Adrenal gland (tissue), 19 donors: ENCODE measurements at regions of chr17 and their contacts with region 1.

Region 1: DNA sequence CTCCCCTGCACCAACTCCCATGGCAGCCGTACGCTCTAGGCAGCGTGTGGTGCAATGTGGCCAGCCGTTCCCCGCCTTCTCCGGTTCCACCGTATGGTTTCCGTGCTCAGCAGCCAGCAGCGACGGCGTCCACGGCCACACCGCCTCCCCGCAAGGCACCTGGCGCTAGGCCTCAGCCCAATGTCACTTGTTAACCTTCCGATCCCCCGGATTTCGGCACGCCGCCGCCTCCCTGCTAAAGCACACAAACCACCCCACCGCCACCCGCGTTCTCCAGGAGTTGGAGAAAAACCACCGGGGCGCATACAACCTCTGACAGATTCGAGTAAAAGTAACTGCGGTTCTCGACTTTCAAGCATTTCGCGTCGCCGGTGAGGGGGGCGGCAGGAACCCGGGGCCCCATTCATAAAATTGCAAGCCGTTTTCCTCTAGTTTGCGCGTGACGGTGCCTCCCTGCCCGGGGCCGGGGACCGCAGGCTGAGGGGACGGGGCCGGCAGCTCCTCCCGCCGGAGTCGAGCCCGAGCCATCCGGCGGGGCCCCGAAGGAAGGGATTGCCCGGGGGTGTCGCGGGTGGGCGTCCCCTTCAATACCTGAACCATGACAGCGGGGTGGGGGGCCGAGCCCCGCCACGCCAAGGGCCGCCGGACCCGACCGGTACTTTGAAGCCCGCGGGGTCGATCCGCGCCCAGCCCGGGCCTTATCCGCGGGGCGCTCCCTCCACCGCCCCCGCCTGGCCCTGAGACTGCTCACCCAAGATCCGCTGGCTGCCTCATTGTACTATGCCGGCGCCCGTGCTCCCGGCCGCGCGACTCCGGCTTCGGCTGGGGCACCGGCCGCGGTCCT is at the start of gene TEX2:
- DNase-seq: peak; percentile 63 to 75 (median 68)
- H3K4me3 ChIP-seq: peak within 1 kb of the TSS; percentile 41 to 99 (median 78)
- H3K27ac ChIP-seq: peak within 1 kb of the TSS; percentile 80 to 98 (median 91)
- H3K4me1 ChIP-seq: peaks cover 26 to 32% of the 10 kb centered on the region in 2 donors
- H3K27me3 ChIP-seq: no peaks in the 10 kb centered on the region
- CTCF ChIP-seq: no peak
- POLR2A ChIP-seq: peak; percentile 68 to 85
- total RNA-seq, gene TEX2: 56.5 to 91.5 (median 63.0) TPM

Region 2: GRCh38 chr17:63974594-63975192 is 287.9 kb before region 1 on chr17:
- intact Hi-C with region 1: no loop called
- DNase-seq: no peak
- H3K4me3 ChIP-seq: no peak overlapping the region
- H3K27ac ChIP-seq: no peak overlapping the region
- H3K4me1 ChIP-seq: no peaks in the 10 kb centered on the region
- H3K27me3 ChIP-seq: no peaks in the 10 kb centered on the region
- CTCF ChIP-seq: no peak
- POLR2A ChIP-seq: no peak

Region 3: DNA sequence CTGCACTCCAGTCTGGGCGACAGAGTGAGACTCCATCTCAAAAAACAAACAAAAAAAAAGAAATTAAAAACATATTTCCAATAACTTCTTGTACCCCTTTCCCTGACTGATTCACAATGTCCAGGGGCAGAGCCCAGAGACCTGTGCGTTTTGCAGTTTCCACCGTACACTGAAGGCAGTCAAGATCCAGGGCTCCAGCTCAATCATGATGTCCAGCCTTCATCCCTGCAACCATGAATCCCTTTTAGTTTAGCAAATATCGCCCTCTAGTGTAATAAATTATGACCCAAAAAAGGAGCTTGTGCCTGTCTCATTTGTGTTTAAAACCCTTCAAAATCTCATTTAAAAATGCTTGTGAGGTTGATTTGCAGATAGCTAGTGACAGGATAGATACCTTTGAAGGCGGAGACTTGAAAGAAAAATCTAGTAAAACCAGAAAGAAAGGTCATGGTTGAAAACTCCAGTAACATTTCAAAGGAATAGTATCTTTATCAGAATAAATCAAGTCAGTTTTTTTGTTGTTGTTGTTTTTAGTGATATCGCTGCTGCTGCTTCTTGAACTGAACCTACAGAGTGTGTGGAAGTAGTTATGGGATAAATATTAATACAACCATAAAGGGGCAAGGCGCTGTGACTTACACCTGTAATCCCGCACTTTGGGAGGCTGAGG is 129.0 kb before region 1 on chr17:
- intact Hi-C with region 1: no loop called
- DNase-seq: peak in 5 of 7 donors; percentile 56 to 76 (median 62)
- H3K4me3 ChIP-seq: no peak overlapping the region
- H3K27ac ChIP-seq: peak overlapping the region in 1 of 5 donors; percentile 90
- H3K4me1 ChIP-seq: peaks cover 26 to 28% of the 10 kb centered on the region in 2 donors
- H3K27me3 ChIP-seq: no peaks in the 10 kb centered on the region
- CTCF ChIP-seq: peak; percentile 55 to 86 (median 75)
- POLR2A ChIP-seq: no peak

Region 4: DNA sequence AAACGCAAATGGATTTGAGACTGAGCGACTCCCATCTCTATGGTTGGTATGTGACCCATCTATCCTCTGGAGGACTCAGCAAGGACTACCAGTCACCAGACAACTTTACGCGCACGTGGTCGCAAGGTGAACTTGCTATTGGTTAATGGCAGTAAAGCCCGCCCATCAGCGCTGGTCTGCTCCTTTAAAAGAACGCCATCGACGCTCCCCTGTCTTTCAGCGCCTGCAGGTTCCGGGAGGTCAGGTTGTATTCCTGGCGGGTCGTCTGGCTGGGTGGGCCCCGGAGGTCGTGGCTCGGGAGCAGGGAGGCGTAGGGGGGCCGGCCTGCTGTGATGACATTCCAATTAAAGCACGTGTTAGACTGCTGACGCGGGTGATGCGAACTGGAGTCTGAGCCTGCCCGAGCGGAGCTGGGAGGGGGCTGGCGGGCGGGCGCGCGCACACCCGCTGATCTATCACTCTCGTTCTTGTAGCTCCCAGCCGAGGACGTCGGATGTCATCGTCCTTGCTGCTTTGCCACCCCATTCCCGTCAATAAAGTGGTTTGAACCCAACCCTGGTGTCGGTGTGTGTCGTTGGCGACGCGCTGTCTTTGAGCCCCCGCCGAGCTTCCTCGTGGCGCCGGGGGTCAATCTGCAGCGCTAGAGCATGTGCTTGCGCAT is 116.8 kb before region 1 on chr17:
- intact Hi-C with region 1: loop called in 1 of 2 experiments (anchors 10 kb)
- DNase-seq: peak; percentile 95 to 100 (median 99)
- H3K4me3 ChIP-seq: peak overlapping the region; percentile 85 to 94 (median 90)
- H3K27ac ChIP-seq: peak overlapping the region; percentile 94 to 98 (median 96)
- H3K4me1 ChIP-seq: peaks cover 14 to 29% of the 10 kb centered on the region in 2 donors
- H3K27me3 ChIP-seq: no peaks in the 10 kb centered on the region
- CTCF ChIP-seq: peak in 3 of 6 experiments; percentile 6 to 36 (median 8)
- POLR2A ChIP-seq: peak; percentile 99

Region 5: GRCh38 chr17:64183815-64184214 is 78.8 kb before region 1 on chr17:
- intact Hi-C with region 1: loop called in 1 of 2 experiments (anchors 10 kb)
- DNase-seq: peak in 1 of 7 donors; percentile 35
- H3K4me3 ChIP-seq: no peak overlapping the region
- H3K27ac ChIP-seq: no peak overlapping the region
- H3K4me1 ChIP-seq: peaks cover 6 to 27% of the 10 kb centered on the region in 2 donors
- H3K27me3 ChIP-seq: no peaks in the 10 kb centered on the region
- CTCF ChIP-seq: no peak
- POLR2A ChIP-seq: no peak

Region 6: GRCh38 chr17:64320613-64321553 is 58.2 kb after region 1 on chr17:
- intact Hi-C with region 1: no loop called
- DNase-seq: peak; percentile 57 to 85 (median 71)
- H3K4me3 ChIP-seq: no peak overlapping the region
- H3K27ac ChIP-seq: no peak overlapping the region
- H3K4me1 ChIP-seq: peaks cover 0 to 13% of the 10 kb centered on the region in 2 donors
- H3K27me3 ChIP-seq: no peaks in the 10 kb centered on the region
- CTCF ChIP-seq: peak; percentile 72 to 85 (median 78)
- POLR2A ChIP-seq: no peak